ENCODE measurements at regions of chr4 and their contacts with region 1.

Region 1: GRCh38 chr4:85147439-85148076 is 181.1 kb upstream of the WDFY3 start:
- DNase-seq: peak; percentile 83
- H3K4me3 ChIP-seq: no peak overlapping the region
- H3K27ac ChIP-seq: no peak overlapping the region
- H3K4me1 ChIP-seq: no peaks in the 10 kb centered on the region
- H3K27me3 ChIP-seq: no peaks in the 10 kb centered on the region
- CTCF ChIP-seq: peak; percentile 59 to 73 (median 65)
- POLR2A ChIP-seq: no peak

Region 2: DNA sequence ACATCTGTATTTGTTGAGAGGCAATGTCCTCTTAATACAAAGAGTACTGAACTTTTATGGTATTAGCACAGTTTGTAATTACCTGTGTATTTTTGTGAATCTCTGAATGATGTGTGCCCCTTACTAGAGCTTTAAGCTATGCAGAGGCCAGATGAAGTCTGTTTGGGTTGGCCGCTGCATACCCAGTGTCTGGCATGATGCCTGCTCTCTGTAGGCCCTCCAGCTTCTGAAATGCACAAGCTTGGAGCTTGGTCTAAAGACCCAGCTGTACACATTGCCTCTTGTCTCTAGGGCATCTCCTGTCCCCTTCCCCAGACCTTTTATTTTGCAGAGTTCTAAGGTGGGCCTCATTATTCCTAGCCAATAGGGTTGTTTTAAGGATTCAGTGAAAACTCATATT is 496.1 kb before region 1 on chr4:
- intact Hi-C with region 1: no loop called
- DNase-seq: no peak
- H3K4me3 ChIP-seq: no peak overlapping the region
- H3K27ac ChIP-seq: no peak overlapping the region
- H3K4me1 ChIP-seq: peaks cover 12% of the 10 kb centered on the region
- H3K27me3 ChIP-seq: no peaks in the 10 kb centered on the region
- CTCF ChIP-seq: no peak
- POLR2A ChIP-seq: no peak

Region 3: GRCh38 chr4:85218756-85219155 is 71.2 kb after region 1 on chr4:
- intact Hi-C with region 1: no loop called
- DNase-seq: no peak
- H3K4me3 ChIP-seq: no peak overlapping the region
- H3K27ac ChIP-seq: no peak overlapping the region
- H3K4me1 ChIP-seq: no peaks in the 10 kb centered on the region
- H3K27me3 ChIP-seq: no peaks in the 10 kb centered on the region
- CTCF ChIP-seq: no peak
- POLR2A ChIP-seq: no peak

Region 4: DNA sequence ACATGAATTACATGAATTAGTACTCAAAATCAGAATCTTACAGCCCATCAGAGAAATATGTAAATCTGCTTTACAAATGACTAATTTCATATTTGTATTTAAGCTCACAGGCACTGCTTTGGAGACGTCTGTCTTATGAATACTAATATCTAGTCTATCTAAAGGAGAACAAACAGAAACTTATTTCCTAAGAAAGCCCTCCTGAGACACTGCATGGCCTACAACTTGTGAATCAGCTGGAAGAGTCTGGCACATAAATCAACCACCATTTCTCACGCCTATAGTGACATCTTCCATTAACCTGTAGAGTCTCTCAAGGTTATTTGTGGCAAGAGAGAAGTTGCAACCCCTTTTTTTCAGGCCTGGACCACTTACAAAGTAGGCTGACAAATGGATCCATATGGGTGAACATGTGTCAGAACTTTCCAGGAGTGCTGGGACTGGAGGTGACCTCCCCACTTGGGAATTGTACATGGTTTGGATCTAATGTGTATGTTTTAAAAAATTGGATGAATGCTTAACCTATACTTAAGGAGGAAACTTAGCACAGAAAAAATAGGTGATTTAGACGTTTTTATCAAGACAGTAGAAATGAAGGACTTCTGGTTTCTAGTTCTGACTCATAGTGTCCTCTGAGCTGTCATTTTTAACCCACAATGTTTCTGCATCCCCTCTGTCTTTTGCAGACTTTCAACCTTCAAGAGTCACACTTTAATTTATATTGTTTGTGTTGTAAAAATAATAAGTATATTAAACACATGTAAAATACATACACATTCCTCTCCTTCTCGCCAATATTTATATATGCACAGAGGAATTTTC is 244.2 kb after region 1 on chr4:
- intact Hi-C with region 1: no loop called
- DNase-seq: no peak
- H3K4me3 ChIP-seq: no peak overlapping the region
- H3K27ac ChIP-seq: no peak overlapping the region
- H3K4me1 ChIP-seq: no peaks in the 10 kb centered on the region
- H3K27me3 ChIP-seq: no peaks in the 10 kb centered on the region
- CTCF ChIP-seq: no peak
- POLR2A ChIP-seq: no peak

Region 5: GRCh38 chr4:85747882-85748491 is 600.4 kb after region 1 on chr4:
- intact Hi-C with region 1: loop called (anchors 10 kb)
- DNase-seq: peak; percentile 75
- H3K4me3 ChIP-seq: no peak overlapping the region
- H3K27ac ChIP-seq: no peak overlapping the region
- H3K4me1 ChIP-seq: peaks cover 8% of the 10 kb centered on the region
- H3K27me3 ChIP-seq: no peaks in the 10 kb centered on the region
- CTCF ChIP-seq: peak; percentile 74 to 81 (median 75)
- POLR2A ChIP-seq: no peak

Region 6: DNA sequence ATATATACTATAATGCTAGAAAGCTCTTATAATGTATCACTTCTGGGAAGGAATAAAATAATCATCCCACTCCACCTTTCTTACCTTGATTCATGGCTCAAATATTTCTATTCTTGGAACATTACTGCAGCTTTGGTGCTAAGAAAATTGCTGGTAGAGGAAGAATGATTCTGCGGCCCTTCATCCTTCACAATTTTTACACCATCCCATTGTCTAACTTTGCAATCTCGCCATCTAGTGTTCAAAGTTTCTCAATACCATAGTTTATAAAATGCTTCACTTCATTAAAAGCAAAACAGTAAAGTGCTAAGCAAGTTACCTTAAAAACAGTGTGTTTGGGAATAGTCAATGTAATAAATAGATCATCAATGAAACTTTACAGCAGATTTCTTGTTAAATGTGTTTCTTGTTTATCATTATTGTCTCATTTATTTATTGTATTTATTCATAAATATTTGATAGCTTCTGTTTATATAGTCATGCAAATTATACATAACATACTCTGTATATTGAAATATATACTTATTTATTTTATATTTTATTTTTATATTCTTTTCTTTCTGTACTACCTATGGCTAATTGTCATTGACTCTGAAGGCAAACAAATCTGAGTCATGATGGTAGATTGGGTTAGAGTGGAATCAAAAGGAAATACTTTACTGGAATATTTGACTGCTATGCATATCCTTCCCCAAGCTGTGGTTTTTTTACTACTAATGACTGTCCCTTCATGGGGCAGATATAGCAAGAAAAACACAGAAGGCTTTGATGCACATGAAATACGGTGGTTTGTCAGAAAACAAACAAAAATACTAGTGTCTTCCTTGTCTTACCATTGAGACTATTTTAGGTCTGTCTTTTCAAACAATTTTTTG is 821.6 kb after region 1 on chr4:
- intact Hi-C with region 1: loop called (anchors 5 kb)
- DNase-seq: no peak
- H3K4me3 ChIP-seq: no peak overlapping the region
- H3K27ac ChIP-seq: no peak overlapping the region
- H3K4me1 ChIP-seq: no peaks in the 10 kb centered on the region
- H3K27me3 ChIP-seq: no peaks in the 10 kb centered on the region
- CTCF ChIP-seq: peak; percentile 21 to 53 (median 47)
- POLR2A ChIP-seq: no peak

Measured in testis (tissue), 5 donors.